B cell (primary cell): ENCODE measurements at regions of chr5 and their contacts with region 1.

Region 1: GRCh38 chr5:42994246-42995151 is 45.6 kb downstream of the ANXA2R start:
- DNase-seq: peak; percentile 94
- ATAC-seq: peak; percentile 67
- H3K4me3 ChIP-seq: peak overlapping the region; percentile 78 to 97 (median 89)
- H3K4me3 Mint-ChIP-seq: peak overlapping the region; percentile 96
- H3K27ac ChIP-seq: peak overlapping the region; percentile 93 to 96
- H3K27ac Mint-ChIP-seq: peak overlapping the region; percentile 100
- H3K4me1 ChIP-seq: peaks cover 23 to 30% of the 10 kb centered on the region in 2 donors
- H3K4me1 Mint-ChIP-seq: peaks cover 32% of the 10 kb centered on the region
- H3K27me3 ChIP-seq: peaks cover 0 to 9% (median 1%) of the 10 kb centered on the region in 4 experiments
- H3K27me3 Mint-ChIP-seq: no peaks in the 10 kb centered on the region
- CTCF ChIP-seq: peak; percentile 84

Region 2: GRCh38 chr5:43008369-43009153 is 14.1 kb after region 1 on chr5:
- CTCF ChIA-PET with region 1: interaction called, 177 read pairs
- POLR2A ChIA-PET with region 1: interaction called, 181 read pairs
- intact Hi-C with region 1: loop called (anchors 1 kb)
- DNase-seq: peak; percentile 95
- ATAC-seq: peak; percentile 58
- H3K4me3 ChIP-seq: peak overlapping the region; percentile 69 to 99 (median 76)
- H3K4me3 Mint-ChIP-seq: peak overlapping the region; percentile 89
- H3K27ac ChIP-seq: peak overlapping the region; percentile 83 to 97
- H3K27ac Mint-ChIP-seq: peak overlapping the region; percentile 98
- H3K4me1 ChIP-seq: peaks cover 20 to 38% of the 10 kb centered on the region in 2 donors
- H3K4me1 Mint-ChIP-seq: peaks cover 31% of the 10 kb centered on the region
- H3K27me3 ChIP-seq: no peaks in the 10 kb centered on the region
- H3K27me3 Mint-ChIP-seq: no peaks in the 10 kb centered on the region
- CTCF ChIP-seq: peak; percentile 36

Region 3: DNA sequence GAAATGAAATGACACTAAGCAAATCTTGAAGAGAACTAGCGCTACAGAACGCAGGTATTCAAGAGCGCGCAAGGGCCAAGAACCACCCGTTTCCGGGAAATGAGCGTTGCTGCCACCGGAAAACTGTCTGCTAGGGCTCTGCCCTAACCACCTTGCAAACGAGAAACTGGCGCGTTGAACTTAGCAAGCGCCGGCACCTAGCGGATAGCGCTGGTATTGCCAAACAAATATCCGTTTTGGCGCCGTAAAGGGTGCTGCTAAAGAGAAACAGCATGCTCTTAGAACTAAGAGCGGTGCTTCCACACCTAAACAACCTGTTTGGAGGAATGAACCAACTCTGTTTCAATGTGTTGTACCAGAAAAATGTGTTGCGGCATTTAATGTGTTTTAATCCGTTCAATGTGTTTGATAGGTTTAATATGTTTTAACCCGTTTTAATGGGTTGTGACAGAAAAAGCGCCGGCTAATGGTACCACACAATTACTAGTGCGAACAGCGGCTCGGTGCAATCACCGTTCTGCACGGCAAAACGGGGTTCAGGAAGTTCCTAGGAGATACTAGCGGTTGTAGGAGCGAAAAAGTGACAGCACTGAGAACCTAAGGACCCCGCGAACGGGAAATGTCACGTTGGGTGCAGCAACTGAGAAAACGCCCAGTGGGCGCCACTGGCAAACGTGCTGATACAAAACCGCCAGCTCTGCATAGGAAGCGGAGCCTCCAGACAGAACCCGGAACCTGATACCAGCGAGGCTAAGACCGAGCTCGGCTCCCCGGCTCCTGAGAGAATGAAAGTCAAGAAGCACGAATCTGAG is 46.0 kb after region 1 on chr5 and contains the start of gene ANXA2R:
- CTCF ChIA-PET with region 1: interaction called, 194 read pairs
- POLR2A ChIA-PET with region 1: interaction called, 133 read pairs
- intact Hi-C with region 1: loop called (anchors 1 kb)
- DNase-seq: peak; percentile 97
- ATAC-seq: peak; percentile 60
- H3K4me3 ChIP-seq: peak within 1 kb of the TSS; percentile 62 to 95 (median 81)
- H3K4me3 Mint-ChIP-seq: peak within 1 kb of the TSS; percentile 97
- H3K27ac ChIP-seq: peak within 1 kb of the TSS; percentile 98 to 99
- H3K27ac Mint-ChIP-seq: peak within 1 kb of the TSS; percentile 98
- H3K4me1 ChIP-seq: peaks cover 25 to 44% of the 10 kb centered on the region in 2 donors
- H3K4me1 Mint-ChIP-seq: peaks cover 39% of the 10 kb centered on the region
- H3K27me3 ChIP-seq: no peaks in the 10 kb centered on the region
- H3K27me3 Mint-ChIP-seq: no peaks in the 10 kb centered on the region
- CTCF ChIP-seq: peak; percentile 86
- total RNA-seq, gene ANXA2R: 19.3 and 20.0 TPM in 2 replicates